Right ventricle myocardium inferior (tissue), 1 donor: ENCODE measurements at regions of chrX and their contacts with region 1.

Region 1: GRCh38 chrX:43557792-43558191 is 98.3 kb upstream of the MAOA start:
- DNase-seq: no peak
- ATAC-seq: no peak

Region 2: DNA sequence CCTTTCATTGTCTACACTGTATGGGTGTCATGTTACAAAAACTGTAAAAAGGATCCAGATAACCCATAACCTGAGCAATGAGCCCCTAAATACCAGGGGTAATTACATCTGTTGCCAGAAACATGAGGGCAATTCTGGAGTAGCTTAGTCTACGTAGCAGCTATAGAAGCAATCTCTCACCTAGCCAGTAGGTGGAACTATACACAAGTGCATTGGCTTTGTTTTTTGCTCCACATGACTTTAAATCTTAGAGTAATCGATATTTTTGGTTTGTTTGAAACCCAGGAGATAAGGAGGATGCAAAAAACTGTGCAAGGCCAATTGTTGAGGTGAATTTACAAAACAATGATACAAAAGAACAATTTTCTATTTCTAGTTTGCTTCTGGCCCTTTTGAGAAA is 1776.3 kb before region 1 on chrX:
- intact Hi-C with region 1: loop called (anchors 5 kb)
- DNase-seq: no peak
- ATAC-seq: no peak

Region 3: GRCh38 chrX:41796577-41796976 is 1761.2 kb before region 1 on chrX:
- intact Hi-C with region 1: loop called (anchors 5 kb)
- DNase-seq: no peak
- ATAC-seq: no peak

Region 4: GRCh38 chrX:43646800-43647199 is 89.0 kb after region 1 on chrX:
- intact Hi-C with region 1: no loop called
- DNase-seq: no peak
- ATAC-seq: no peak

Region 5: DNA sequence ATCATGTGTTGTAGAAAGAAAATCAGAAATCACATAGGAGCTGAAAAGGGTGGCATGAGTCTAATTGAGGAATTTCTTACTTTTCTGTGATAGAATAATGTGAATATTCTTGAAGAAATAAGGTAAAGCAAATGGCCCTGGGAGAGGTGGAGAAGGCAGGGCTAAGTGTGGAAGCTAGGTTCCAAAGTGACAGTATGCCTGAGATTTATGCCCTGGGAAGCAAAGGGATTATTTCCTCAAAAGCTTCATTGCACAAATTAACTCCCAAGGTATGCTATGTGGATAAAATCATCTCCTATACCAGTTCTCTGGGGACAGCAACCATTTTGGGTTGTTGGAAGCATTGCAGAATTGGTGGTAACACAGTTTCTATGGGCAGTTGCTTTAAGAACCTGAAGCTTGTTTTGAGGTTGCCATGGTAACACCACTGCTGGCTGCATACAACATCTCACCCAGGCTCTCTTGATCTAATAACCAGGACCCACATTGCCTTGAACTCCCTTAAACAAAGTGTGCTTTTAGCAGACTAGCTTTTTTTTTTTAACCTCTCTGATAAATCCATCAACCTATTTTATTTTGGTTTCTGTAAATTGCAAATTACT is 119.3 kb after region 1 on chrX:
- intact Hi-C with region 1: no loop called
- DNase-seq: no peak
- ATAC-seq: no peak

Region 6: GRCh38 chrX:43750248-43750676 is 192.5 kb after region 1 on chrX:
- intact Hi-C with region 1: loop called (anchors 1 kb)
- DNase-seq: no peak
- ATAC-seq: peak; percentile 86